ENCODE measurements at regions of chr5 and their contacts with region 1.

Region 1: GRCh38 chr5:112921833-112922817 is at the start of gene REEP5:
- DNase-seq: peak; percentile 91
- ATAC-seq: peak; percentile 81
- H3K4me3 Mint-ChIP-seq: peak within 1 kb of the TSS; percentile 84
- H3K27ac Mint-ChIP-seq: peak within 1 kb of the TSS; percentile 95
- H3K4me1 Mint-ChIP-seq: peaks cover 55% of the 10 kb centered on the region
- H3K27me3 Mint-ChIP-seq: no peaks in the 10 kb centered on the region
- total RNA-seq, gene REEP5: 44.3 to 50.4 TPM

Region 2: DNA sequence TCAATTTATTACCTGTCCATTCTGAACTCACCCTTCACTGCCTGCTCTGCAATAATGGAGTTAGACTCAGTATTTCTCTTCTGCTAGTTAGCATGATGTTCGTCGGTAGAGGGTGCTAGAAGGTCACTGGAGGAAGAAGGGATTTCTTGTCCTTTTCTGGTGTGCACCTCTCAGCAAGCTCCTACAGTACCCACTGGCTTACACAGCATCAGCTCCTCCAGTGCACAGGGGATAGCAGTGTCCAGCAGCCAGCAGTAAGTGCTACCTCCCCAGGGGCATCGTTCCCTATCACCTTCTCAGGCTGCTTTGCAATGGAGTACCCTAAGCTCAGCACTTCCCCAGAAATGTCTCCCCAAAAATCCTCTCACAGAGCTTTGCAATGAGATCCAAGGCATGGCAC is 230.4 kb before region 1 on chr5:
- CTCF ChIA-PET with region 1: no interaction called
- POLR2A ChIA-PET with region 1: no interaction called
- intact Hi-C with region 1: loop called in 1 of 2 experiments (anchors 5 kb)
- DNase-seq: peak; percentile 52
- ATAC-seq: peak; percentile 68
- H3K4me3 Mint-ChIP-seq: no peak overlapping the region
- H3K27ac Mint-ChIP-seq: no peak overlapping the region
- H3K4me1 Mint-ChIP-seq: no peaks in the 10 kb centered on the region
- H3K27me3 Mint-ChIP-seq: peaks cover 29% of the 10 kb centered on the region

Region 3: DNA sequence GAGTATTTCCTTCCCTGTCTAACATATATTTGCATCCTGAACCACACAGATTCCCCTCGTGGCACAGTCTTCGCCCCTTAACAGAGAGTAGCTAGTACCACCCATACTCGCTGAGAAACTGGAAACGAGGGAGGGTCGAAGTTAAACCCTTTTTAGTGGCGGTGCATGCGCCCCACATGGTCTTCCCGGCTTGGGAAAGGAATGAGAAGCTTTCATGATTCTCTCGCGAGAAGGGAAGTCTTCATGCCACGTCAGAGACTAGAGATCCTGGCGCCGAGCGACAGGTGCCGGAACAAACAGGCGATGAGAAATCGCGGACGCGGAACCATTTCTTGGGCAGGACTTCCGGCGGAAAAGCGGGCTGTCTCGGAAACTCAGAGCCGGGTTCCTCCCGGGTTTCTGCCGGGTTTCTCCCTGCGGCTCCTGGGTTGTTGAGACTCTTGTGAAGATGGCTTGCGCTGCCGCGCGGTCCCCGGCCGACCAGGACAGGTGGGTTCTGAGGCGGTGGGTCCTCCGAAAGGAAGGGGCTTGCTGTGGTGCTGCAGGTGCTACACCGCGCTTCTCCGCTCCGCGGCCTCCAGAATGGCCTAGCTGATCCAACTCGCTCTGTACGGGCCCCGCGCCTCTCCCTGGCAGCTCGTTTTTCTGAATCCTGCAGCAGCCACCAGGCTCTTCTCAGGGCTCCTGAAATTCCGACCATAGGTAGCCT is 61.0 kb before region 1 on chr5 and contains the start of gene SRP19:
- CTCF ChIA-PET with region 1: interaction called, 6 read pairs
- POLR2A ChIA-PET with region 1: no interaction called
- intact Hi-C with region 1: loop called (anchors 1 kb)
- DNase-seq: peak; percentile 95
- ATAC-seq: peak; percentile 95
- H3K4me3 Mint-ChIP-seq: peak within 1 kb of the TSS; percentile 97
- H3K27ac Mint-ChIP-seq: peak within 1 kb of the TSS; percentile 98
- H3K4me1 Mint-ChIP-seq: peaks cover 32% of the 10 kb centered on the region
- H3K27me3 Mint-ChIP-seq: peaks cover 9% of the 10 kb centered on the region
- total RNA-seq, gene SRP19: 47.6 to 49.4 TPM

Region 4: DNA sequence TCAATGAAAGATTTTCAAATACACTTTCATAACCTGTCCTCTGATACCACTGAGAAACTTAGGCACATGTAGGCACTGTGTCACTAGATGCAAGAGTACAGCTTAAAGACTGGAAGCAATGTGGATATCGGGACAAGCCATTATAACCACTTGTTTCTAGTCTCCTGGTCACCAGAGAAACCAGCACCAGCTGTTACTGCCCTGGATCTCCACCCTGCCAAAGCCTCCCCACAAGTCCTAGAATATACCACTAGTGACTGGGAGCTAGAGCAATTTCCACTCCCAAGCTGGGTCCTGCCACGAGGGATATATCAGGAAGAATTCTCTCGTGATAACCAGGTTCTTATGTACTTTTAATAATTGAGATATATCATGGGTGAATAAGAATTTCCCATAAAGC is 19.6 kb before region 1 on chr5:
- CTCF ChIA-PET with region 1: no interaction called
- POLR2A ChIA-PET with region 1: no interaction called
- intact Hi-C with region 1: no loop called
- DNase-seq: no peak
- ATAC-seq: no peak
- H3K4me3 Mint-ChIP-seq: no peak overlapping the region
- H3K27ac Mint-ChIP-seq: no peak overlapping the region
- H3K4me1 Mint-ChIP-seq: no peaks in the 10 kb centered on the region
- H3K27me3 Mint-ChIP-seq: no peaks in the 10 kb centered on the region

Region 5: GRCh38 chr5:112958093-112959088 is 36.3 kb after region 1 on chr5:
- CTCF ChIA-PET with region 1: interaction called, 13 read pairs
- POLR2A ChIA-PET with region 1: no interaction called
- intact Hi-C with region 1: loop called in 1 of 2 experiments (anchors 2 kb)
- DNase-seq: peak; percentile 60
- ATAC-seq: peak; percentile 91
- H3K4me3 Mint-ChIP-seq: no peak overlapping the region
- H3K27ac Mint-ChIP-seq: no peak overlapping the region
- H3K4me1 Mint-ChIP-seq: peaks cover 36% of the 10 kb centered on the region
- H3K27me3 Mint-ChIP-seq: no peaks in the 10 kb centered on the region

Region 6: DNA sequence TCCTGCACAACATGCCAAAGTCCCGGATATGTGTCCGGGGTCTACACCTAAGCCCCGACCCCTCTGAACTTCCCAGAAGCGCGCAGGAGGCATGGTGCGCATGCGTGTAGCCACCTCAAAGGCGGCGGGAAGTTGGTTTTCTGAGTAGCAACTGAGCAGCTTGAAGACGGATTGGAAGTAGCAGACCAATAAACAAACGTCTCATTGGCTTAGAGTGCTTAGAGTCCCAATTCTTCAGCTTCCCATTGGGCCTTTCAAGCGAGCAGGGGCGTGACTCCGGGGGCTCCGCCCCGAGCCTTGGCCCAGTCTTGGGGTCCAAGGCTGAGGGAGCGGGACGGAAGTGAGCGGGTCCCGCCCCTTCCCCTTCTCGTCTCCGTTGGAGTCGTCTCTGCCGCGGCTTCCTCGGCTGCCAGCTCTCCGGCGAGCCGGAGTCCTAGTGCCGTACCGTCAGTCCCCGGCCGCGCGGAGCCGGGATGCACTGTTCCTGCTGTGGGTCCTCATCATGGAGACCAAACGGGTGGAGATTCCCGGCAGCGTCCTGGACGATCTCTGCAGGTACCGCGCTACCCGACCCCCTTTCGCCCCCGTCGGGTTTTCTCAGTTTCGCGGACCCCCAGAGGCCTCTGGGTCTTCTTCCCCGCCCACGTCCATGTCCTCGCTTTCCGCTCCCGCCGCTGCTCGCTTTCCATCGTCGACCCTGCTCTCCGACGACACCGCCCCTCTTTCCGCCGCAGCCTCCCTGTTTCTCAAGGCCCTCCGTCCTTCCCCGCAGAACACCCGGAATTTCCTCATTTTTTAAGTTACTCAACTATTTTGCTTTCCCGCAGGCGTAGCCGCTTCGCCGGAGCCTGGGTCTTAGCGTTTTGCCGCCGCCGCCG is 54.5 kb after region 1 on chr5 and contains the start of gene DCP2:
- CTCF ChIA-PET with region 1: interaction called, 9 read pairs
- POLR2A ChIA-PET with region 1: interaction called, 4 read pairs
- intact Hi-C with region 1: loop called (anchors 1 to 2 kb)
- DNase-seq: peak; percentile 96
- ATAC-seq: peak; percentile 94
- H3K4me3 Mint-ChIP-seq: peak within 1 kb of the TSS; percentile 99
- H3K27ac Mint-ChIP-seq: peak within 1 kb of the TSS; percentile 98
- H3K4me1 Mint-ChIP-seq: peaks cover 39% of the 10 kb centered on the region
- H3K27me3 Mint-ChIP-seq: no peaks in the 10 kb centered on the region
- total RNA-seq, gene DCP2: 94.0 to 101 TPM

Region 7: GRCh38 chr5:113520429-113520828 is 598.3 kb after region 1 on chr5:
- CTCF ChIA-PET with region 1: no interaction called
- POLR2A ChIA-PET with region 1: interaction called, 3 read pairs
- intact Hi-C with region 1: loop called in 1 of 2 experiments (anchors 5 kb)
- DNase-seq: peak; percentile 52
- ATAC-seq: peak; percentile 88
- H3K4me3 Mint-ChIP-seq: no peak overlapping the region
- H3K27ac Mint-ChIP-seq: no peak overlapping the region
- H3K4me1 Mint-ChIP-seq: peaks cover 62% of the 10 kb centered on the region
- H3K27me3 Mint-ChIP-seq: no peaks in the 10 kb centered on the region

Measured in activated CD4-positive, alpha-beta T cell treated with anti-CD3 and anti-CD28 coated beads for 36 hours (primary cell).